ENCODE measurements at regions of chr2 and their contacts with region 1.

Region 1: DNA sequence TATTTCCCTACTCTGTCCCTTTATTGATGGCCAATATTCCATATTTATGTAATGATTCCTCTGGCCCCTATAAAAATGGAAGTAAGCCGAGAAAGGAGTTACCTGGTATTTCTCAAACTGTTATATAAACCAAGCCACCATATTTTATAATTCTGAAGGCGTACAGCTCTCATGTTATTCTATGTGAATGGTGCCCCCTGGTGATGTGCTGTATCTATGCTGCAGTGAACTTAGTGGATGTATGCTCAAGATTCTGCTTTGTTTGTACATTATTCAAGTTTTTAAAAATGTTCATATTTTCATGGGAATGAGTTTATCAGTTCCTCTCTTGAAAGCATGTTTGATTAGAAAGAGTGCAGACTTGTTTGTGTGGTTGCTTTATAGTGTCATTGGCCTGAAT is 194.5 kb upstream of the LRRTM1 start:
- DNase-seq: peak in 1 of 2 donors; percentile 51
- ATAC-seq: peak in 6 of 8 donors; percentile 57 to 76 (median 68)
- H3K4me3 ChIP-seq: no peak overlapping the region
- H3K27ac ChIP-seq: no peak overlapping the region
- H3K4me1 ChIP-seq: no peaks in the 10 kb centered on the region
- H3K27me3 ChIP-seq: no peaks in the 10 kb centered on the region
- CTCF ChIP-seq: peak; percentile 33 to 83 (median 68)

Region 2: DNA sequence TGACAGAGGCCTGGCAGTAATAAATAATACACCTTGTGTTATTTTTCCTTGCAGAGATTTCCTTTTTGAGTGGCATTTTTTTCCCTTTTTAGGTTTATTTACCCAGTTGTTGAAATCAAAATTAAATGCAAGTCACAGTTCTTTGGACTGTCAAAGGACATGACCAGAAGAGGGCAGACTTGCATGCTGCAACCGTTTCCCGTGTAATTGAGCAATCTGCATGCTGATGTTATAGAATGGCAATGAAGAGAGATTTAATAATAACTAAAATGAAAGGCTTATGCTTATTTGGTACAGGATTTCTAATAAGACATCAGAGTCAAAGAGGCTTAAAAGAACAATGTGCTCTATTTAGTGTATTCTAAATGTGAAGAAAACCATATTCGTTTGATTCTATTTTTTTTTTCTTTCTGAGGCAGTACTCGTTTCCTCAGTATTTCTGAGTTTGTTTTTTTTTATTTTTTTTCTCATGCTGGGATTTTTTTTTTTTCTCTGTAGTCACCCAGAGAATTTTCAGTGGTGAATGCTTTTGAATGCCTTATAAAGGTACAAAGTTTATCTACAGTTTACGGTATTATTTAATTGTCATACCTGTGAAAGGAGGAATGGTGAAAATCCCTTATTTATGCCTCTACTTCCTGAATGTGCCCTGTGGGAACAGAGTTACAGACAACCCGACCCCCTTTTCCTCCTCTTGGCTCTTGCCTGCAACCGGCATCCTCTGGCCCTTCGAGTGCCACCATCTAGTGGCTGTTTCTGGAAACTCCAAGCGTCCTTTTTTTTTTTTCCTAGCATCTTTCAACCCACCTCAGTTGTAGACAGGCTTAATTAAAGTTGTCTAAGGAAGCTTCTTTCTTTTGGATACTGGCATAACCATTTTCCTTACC is 563.1 kb before region 1 on chr2:
- intact Hi-C with region 1: loop called in 1 of 10 experiments (anchors 10 kb)
- DNase-seq: peak in 1 of 2 donors; percentile 24
- ATAC-seq: peak in 4 of 8 donors; percentile 56 to 75 (median 72)
- H3K4me3 ChIP-seq: peak overlapping the region in 3 of 10 donors; percentile 2 to 33 (median 3)
- H3K27ac ChIP-seq: no peak overlapping the region
- H3K4me1 ChIP-seq: peaks cover 0 to 9% (median 0%) of the 10 kb centered on the region in 9 donors
- H3K27me3 ChIP-seq: peaks cover 0 to 5% (median 0%) of the 10 kb centered on the region in 7 donors
- CTCF ChIP-seq: peak; percentile 23 to 68 (median 59)

Region 3: GRCh38 chr2:80073134-80073561 is 425.9 kb before region 1 on chr2:
- intact Hi-C with region 1: loop called in 7 of 10 experiments (anchors 5 kb)
- DNase-seq: peak in 1 of 2 donors; percentile 28
- ATAC-seq: peak in 2 of 8 donors; percentile 62 to 71
- H3K4me3 ChIP-seq: no peak overlapping the region
- H3K27ac ChIP-seq: no peak overlapping the region
- H3K4me1 ChIP-seq: no peaks in the 10 kb centered on the region
- H3K27me3 ChIP-seq: peaks cover 0 to 17% (median 0%) of the 10 kb centered on the region in 7 donors
- CTCF ChIP-seq: peak; percentile 42 to 72 (median 68)

Region 4: DNA sequence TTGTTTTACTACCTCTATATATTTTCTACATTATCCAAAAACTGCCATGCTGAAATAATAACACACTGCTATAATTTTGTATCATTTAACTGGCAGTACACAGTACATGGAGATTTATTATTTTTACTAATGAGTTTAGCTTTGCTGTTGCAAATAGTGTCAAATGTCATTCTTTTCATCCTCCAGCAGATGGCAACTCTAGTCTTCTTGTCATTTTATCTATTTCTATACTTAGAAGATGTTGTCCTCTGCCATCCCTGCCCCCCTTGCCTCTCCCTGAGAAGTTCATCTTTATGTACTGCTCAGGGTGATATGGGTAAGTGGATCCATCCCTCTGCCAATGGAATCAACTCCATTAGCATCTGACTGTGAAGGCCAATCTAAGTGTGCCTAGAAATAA is 172.9 kb before region 1 on chr2:
- intact Hi-C with region 1: loop called (anchors 1 to 10 kb)
- DNase-seq: peak in 1 of 2 donors; percentile 17
- ATAC-seq: peak in 5 of 8 donors; percentile 38 to 70 (median 62)
- H3K4me3 ChIP-seq: no peak overlapping the region
- H3K27ac ChIP-seq: no peak overlapping the region
- H3K4me1 ChIP-seq: peaks cover 0 to 9% (median 0%) of the 10 kb centered on the region in 9 donors
- H3K27me3 ChIP-seq: peaks cover 0 to 32% (median 22%) of the 10 kb centered on the region in 7 donors
- CTCF ChIP-seq: peak in 8 of 9 donors; percentile 37 to 75 (median 61)

Region 5: GRCh38 chr2:80621656-80622055 is 122.6 kb after region 1 on chr2:
- intact Hi-C with region 1: no loop called
- DNase-seq: no peak
- ATAC-seq: no peak
- H3K4me3 ChIP-seq: no peak overlapping the region
- H3K27ac ChIP-seq: no peak overlapping the region
- H3K4me1 ChIP-seq: no peaks in the 10 kb centered on the region
- H3K27me3 ChIP-seq: peaks cover 0 to 4% (median 0%) of the 10 kb centered on the region in 7 donors
- CTCF ChIP-seq: no peak